GM13977 (cell line): ENCODE measurements at regions of chr1 and their contacts with region 1.

Region 1: GRCh38 chr1:214584805-214585766 is 17.9 kb upstream of the CENPF start:
- DNase-seq: no peak
- CTCF ChIP-seq: peak; percentile 60

Region 2: GRCh38 chr1:214261206-214262123 is 323.6 kb before region 1 on chr1:
- in situ Hi-C with region 1: loop called (anchors 25 kb)
- DNase-seq: peak; percentile 51
- CTCF ChIP-seq: peak; percentile 98

Region 3: GRCh38 chr1:214328770-214329469 is 256.2 kb before region 1 on chr1:
- in situ Hi-C with region 1: loop called (anchors 10 kb)
- DNase-seq: peak; percentile 78
- CTCF ChIP-seq: peak; percentile 93

Region 4: DNA sequence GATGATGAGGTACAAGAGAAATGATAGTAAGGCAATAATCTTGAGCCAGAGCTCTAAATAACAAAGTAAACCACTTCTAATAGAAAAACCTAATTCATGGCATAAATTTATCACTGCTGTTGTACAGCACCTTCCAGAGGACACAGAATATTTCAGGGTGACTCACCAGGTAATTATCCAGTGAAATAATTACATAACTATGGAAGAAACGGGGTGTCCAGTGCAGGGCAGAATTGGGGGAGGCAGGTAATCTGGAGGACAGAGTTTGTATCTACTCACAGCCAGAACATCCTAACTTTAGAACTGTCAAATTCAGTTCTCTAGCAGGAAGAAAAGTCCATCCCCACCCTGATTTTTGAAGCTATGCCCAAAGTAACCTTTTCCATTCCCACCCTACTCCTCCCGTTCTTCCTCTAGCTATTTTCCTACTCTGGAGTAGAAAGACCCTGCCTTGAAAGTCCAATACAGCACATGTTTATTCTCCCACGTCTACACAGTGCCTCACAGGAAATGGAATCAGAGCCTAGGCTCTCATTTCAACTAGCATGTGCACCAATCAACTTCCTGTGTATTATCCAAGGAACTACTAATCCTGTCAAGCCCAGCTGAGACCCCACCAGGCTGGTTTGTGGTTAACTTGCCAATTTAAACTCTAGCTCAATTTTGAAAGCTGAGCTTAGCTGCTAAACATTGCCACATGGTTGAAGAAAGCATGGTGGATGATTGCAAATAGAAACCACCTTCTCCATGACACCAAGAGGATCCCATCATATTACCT is 130.3 kb before region 1 on chr1:
- in situ Hi-C with region 1: no loop called
- DNase-seq: no peak
- CTCF ChIP-seq: no peak